Activated naive CD8-positive, alpha-beta T cell treated with anti-CD3 and anti-CD28 coated beads, Interleukin-2, amount 10 ng/mL, durations not matched to agents 7 days and 5 days (primary cell): ENCODE measurements at regions of chr9 and their contacts with region 1.

Region 1: DNA sequence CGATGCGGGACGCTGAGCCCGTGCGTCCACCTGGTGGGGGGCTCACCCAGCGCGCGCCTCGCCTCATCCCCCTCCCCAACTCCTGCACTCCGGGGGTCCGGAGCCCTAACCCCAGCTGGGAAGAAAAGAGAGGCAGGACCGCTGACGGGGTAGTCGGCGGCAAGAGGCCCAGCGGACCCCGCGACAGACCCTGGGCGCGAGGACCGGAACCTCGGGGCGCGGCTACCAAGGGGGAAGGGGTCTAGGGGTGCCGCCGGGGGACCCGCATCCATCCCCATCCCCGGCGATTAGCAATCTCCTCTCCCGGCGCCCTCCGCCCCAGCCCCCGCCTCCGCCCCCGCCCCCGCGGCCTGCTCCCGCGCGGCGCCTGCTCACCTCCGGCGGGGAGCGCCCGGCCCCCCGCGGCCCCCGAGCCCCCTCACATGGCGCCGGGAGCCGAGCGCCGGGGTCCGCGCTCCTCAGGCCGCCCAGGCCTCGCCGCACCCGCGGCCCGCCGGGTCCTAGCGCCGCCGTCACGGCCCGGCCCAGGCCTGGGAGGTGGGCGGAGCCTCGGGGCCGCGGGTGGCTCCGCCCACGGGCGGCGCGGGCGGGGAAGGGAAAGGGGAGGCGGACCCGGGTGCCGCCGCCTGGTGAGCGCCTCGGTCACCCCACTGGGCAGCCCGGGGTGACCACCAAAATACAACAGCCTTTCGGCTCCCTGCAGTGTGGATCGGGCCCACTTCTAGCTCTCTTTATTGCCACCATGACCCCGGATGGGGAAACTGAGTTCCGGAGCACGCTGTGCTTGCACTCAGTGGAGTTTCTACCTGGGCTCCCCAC is at the start of gene ST6GALNAC6:
- DNase-seq: peak; percentile 91
- ATAC-seq: peak; percentile 65
- H3K4me3 Mint-ChIP-seq: peak within 1 kb of the TSS; percentile 89
- H3K27ac Mint-ChIP-seq: peak within 1 kb of the TSS; percentile 82
- H3K4me1 Mint-ChIP-seq: peaks cover 38% of the 10 kb centered on the region
- H3K27me3 Mint-ChIP-seq: no peaks in the 10 kb centered on the region
- total RNA-seq, gene ST6GALNAC6: 105 to 112 TPM

Region 2: GRCh38 chr9:127779136-127779981 is 120.0 kb before region 1 on chr9:
- POLR2A ChIA-PET with region 1: interaction called, 15 read pairs
- DNase-seq: peak; percentile 66
- ATAC-seq: peak; percentile 46
- H3K4me3 Mint-ChIP-seq: peak overlapping the region; percentile 100
- H3K27ac Mint-ChIP-seq: peak overlapping the region; percentile 99
- H3K4me1 Mint-ChIP-seq: peaks cover 49% of the 10 kb centered on the region
- H3K27me3 Mint-ChIP-seq: no peaks in the 10 kb centered on the region

Region 3: DNA sequence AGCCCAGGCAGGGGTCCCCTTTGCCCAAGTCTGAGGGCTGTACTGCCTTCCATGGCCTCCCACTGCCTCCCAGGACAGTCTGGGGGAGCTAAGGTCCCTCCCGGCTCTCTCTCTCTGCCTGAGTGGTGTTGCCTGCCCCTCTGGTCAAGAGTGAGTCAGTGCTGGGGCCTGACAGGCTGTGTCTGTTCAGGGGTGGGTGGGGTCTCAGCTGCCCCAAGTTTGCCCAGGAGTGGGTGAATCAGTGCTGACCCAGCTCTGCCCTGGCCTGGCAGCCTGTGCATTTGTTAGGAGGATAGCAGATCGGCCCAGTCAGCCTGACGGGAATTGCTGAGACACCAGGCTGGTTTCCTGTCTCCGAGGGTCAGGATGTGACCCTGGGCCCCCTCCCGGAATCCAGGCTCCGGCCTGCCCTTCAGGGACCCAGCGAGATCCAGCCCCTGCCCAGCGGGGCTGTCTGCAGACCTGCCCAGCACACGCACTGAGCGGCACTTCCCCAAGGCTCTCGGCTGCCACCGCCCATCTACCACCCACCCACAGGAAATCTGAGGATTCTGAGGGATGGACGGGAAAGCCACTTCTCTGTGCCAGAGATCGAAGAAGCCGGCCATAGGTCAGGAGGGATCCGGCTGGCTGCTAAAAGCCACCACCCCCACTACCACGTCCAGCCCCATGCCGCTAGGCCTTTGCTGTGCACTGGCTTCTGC is 60.8 kb before region 1 on chr9:
- POLR2A ChIA-PET with region 1: no interaction called
- DNase-seq: no peak
- ATAC-seq: no peak
- H3K4me3 Mint-ChIP-seq: no peak overlapping the region
- H3K27ac Mint-ChIP-seq: no peak overlapping the region
- H3K4me1 Mint-ChIP-seq: peaks cover 1% of the 10 kb centered on the region
- H3K27me3 Mint-ChIP-seq: no peaks in the 10 kb centered on the region

Region 4: DNA sequence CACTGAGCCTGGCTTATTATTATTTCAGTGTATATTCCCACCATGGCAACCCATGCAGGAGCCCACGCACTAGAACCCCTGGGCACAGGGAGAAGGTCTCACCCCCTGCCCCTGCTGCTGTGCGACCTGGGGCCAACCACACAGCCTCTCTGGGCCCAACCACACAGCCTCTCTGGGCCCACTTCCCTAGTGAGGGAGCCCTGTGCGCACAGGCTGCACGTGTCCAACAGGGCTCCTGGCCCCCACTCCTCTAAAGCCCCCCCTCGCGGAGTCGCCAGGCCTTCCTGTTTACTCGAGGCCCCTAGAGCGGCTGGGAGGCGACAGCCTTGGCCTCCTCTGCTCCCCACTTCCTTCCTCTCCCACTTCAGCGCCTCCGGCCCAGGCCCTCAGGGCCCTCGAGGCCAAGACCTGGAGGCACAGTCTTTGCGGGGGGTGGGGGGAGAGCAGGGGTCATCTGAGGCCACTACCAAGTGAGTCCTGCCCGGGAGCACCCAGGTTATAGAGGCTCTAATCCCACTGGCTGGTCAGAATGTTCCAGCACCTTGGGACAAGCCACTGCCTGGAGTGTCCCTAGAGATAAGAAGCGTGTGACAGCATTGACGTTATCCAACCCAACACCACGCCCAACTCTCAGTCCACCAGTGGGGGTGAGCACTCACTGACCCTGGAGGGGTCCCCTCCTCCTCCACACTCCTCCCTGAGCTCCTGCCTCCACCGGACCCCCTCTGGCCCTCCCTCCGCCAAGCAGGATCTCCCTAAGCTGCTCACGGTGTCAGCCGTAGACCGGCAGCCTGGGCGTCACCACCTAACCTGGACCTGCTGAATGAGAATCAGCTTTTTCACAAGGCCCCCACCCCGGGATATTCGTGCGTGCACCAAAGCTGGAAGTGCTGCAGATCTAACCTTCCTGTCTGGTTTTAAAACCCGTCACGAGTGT is 37.0 kb before region 1 on chr9:
- POLR2A ChIA-PET with region 1: interaction called, 14 read pairs
- DNase-seq: peak; percentile 70
- ATAC-seq: peak; percentile 84
- H3K4me3 Mint-ChIP-seq: peak overlapping the region; percentile 55
- H3K27ac Mint-ChIP-seq: peak overlapping the region; percentile 90
- H3K4me1 Mint-ChIP-seq: peaks cover 40% of the 10 kb centered on the region
- H3K27me3 Mint-ChIP-seq: no peaks in the 10 kb centered on the region

Region 5: GRCh38 chr9:127876026-127876763 is 23.1 kb before region 1 on chr9:
- POLR2A ChIA-PET with region 1: no interaction called
- DNase-seq: no peak
- ATAC-seq: no peak
- H3K4me3 Mint-ChIP-seq: no peak overlapping the region
- H3K27ac Mint-ChIP-seq: no peak overlapping the region
- H3K4me1 Mint-ChIP-seq: no peaks in the 10 kb centered on the region
- H3K27me3 Mint-ChIP-seq: peaks cover 2% of the 10 kb centered on the region

Region 6: GRCh38 chr9:127916665-127917613 is 17.6 kb after region 1 on chr9 and contains the start of gene ST6GALNAC4:
- POLR2A ChIA-PET with region 1: interaction called, 187 read pairs
- DNase-seq: peak; percentile 97
- ATAC-seq: peak; percentile 90
- H3K4me3 Mint-ChIP-seq: peak within 1 kb of the TSS; percentile 96
- H3K27ac Mint-ChIP-seq: peak within 1 kb of the TSS; percentile 96
- H3K4me1 Mint-ChIP-seq: peaks cover 41% of the 10 kb centered on the region
- H3K27me3 Mint-ChIP-seq: no peaks in the 10 kb centered on the region
- total RNA-seq, gene ST6GALNAC4: 51.1 to 59.5 TPM

Region 7: GRCh38 chr9:127943731-127944144 is 44.4 kb after region 1 on chr9:
- POLR2A ChIA-PET with region 1: no interaction called
- DNase-seq: peak; percentile 82
- ATAC-seq: peak; percentile 68
- H3K4me3 Mint-ChIP-seq: no peak overlapping the region
- H3K27ac Mint-ChIP-seq: peak overlapping the region; percentile 52
- H3K4me1 Mint-ChIP-seq: peaks cover 13% of the 10 kb centered on the region
- H3K27me3 Mint-ChIP-seq: no peaks in the 10 kb centered on the region